PC-9 (cell line): ENCODE measurements at regions of chr7 and their contacts with region 1.

Region 1: GRCh38 chr7:24572997-24573625 is at the start of gene PALS2:
- DNase-seq: peak; percentile 51 to 90
- H3K4me3 ChIP-seq: peak within 1 kb of the TSS; percentile 71
- H3K27ac ChIP-seq: peak within 1 kb of the TSS; percentile 46
- H3K4me1 ChIP-seq: peaks cover 24% of the 10 kb centered on the region
- H3K27me3 ChIP-seq: no peaks in the 10 kb centered on the region
- CTCF ChIP-seq: no peak
- total RNA-seq, gene PALS2: 35.8 and 42.4 TPM in 2 replicates

Region 2: GRCh38 chr7:23679898-23680413 is 893.2 kb before region 1 on chr7 and contains the start of gene FAM221A:
- CTCF ChIA-PET with region 1: interaction called, 3 read pairs
- POLR2A ChIA-PET with region 1: no interaction called
- intact Hi-C with region 1: loop called (anchors 10 kb)
- DNase-seq: peak; percentile 48 to 67
- H3K4me3 ChIP-seq: peak within 1 kb of the TSS; percentile 48
- H3K27ac ChIP-seq: no peak within 1 kb of the TSS
- H3K4me1 ChIP-seq: no peaks in the 10 kb centered on the region
- H3K27me3 ChIP-seq: no peaks in the 10 kb centered on the region
- CTCF ChIP-seq: peak; percentile 49
- total RNA-seq, gene FAM221A: 2.4 and 3.6 TPM in 2 replicates

Region 3: DNA sequence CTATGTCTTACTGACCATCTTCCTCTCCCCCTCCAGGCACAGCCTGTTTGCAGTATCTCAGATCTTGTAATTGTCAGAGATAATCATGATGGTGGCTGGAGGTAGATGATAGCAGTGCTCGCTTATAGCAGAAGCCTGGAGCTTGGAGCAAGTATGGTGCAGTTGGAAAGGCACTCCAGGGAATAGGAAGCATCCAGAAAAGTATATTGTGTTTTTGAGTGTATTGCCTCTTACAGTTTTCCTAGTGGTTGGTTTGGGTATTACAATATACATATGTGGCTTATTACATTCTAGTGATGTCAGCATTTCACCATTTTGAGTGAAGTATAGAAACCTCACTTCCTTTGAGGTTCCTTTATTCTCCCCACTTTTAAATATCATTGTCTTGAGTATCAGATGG is 761.6 kb before region 1 on chr7:
- CTCF ChIA-PET with region 1: no interaction called
- POLR2A ChIA-PET with region 1: no interaction called
- intact Hi-C with region 1: no loop called
- DNase-seq: no peak
- H3K4me3 ChIP-seq: no peak overlapping the region
- H3K27ac ChIP-seq: no peak overlapping the region
- H3K4me1 ChIP-seq: no peaks in the 10 kb centered on the region
- H3K27me3 ChIP-seq: no peaks in the 10 kb centered on the region
- CTCF ChIP-seq: peak; percentile 76

Region 4: GRCh38 chr7:24356718-24357386 is 216.3 kb before region 1 on chr7:
- CTCF ChIA-PET with region 1: no interaction called
- POLR2A ChIA-PET with region 1: no interaction called
- intact Hi-C with region 1: no loop called
- DNase-seq: no peak
- H3K4me3 ChIP-seq: no peak overlapping the region
- H3K27ac ChIP-seq: no peak overlapping the region
- H3K4me1 ChIP-seq: no peaks in the 10 kb centered on the region
- H3K27me3 ChIP-seq: no peaks in the 10 kb centered on the region
- CTCF ChIP-seq: no peak

Region 5: DNA sequence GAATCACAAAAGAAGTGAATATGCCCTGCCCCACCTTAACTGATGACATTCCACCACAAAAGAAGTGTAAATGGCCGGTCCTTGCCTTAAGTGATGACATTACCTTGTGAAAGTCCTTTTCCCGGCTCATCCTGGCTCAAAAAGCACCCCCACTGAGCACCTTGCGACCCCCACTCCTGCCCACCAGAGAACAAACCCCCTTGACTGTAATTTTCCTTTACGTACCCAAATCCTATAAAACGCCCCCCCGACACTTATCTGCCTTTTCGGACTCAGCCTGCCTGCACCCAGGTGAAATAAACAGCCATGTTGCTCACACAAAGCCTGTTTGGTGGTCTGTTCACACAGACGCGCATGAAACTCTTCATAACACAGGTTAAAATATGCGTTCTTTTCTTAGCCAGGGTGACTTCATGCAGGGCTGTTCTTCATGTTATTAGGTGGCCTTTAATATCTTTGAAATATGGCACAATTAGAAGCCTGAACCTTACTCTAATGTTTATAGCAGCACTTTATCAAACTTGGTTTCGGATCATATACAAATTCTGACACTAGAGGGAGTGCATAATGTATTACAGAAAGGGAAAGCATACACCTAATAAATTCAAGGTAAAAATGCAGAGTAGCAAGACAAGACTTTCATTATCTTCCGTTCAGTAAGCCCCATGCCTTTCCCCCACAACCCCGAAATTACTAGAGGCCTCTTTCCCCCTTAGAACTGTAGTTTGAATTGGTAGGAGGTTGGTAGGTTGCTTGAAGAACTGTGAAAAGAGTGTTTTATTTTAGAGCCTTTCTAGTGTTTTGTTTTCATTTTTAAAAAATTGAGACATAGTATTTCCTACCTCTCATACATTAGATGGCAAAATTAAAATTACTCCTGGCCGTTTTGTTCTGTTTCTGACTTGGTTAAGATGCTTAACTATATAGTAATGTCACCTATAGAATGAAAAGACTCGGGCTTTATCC is 171.2 kb before region 1 on chr7:
- CTCF ChIA-PET with region 1: no interaction called
- POLR2A ChIA-PET with region 1: no interaction called
- intact Hi-C with region 1: loop called (anchors 5 kb)
- DNase-seq: peak in 1 of 2 experiments; percentile 60
- H3K4me3 ChIP-seq: peak overlapping the region; percentile 50; the same call in 1 of the 2 replicates
- H3K27ac ChIP-seq: no peak overlapping the region
- H3K4me1 ChIP-seq: 0 out of 2 replicates have a peak, but pooled peaks cover 4% of the 10 kb centered on the region
- H3K27me3 ChIP-seq: no peaks in the 10 kb centered on the region
- CTCF ChIP-seq: peak; percentile 82

Region 6: DNA sequence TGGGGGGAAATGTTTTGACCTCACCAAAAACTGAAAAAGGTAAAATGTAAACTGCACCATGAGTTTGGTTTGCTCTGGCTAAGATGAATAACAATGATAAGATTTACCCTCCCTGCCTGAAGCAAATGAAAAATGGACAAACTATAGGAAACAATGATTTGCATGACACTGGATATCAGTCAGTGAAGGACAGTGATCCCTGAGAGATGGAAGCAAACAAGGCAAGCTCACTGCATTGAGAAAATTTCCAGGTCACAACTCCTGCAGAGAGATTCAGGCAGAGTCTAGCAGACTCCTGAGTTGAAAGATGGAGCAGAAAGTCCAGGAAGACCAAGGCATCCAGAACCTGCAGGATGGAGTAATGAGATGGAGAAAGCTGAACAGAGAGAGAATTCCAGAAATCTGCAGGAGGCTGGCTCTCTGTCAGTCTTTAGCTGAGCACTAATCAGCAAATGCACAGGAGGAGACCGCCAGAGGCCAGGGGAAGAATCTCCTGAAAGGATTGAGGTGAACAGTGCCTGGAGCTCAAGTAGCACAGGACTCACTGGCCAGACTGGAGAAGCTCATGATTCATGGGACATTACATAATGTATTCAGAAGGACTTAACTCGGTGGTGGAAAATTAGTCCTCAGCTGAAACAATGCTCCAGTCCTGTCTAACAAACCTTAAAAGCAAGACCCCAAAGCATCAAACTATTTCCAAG is 51.0 kb before region 1 on chr7:
- CTCF ChIA-PET with region 1: no interaction called
- POLR2A ChIA-PET with region 1: no interaction called
- intact Hi-C with region 1: no loop called
- DNase-seq: no peak
- H3K4me3 ChIP-seq: no peak overlapping the region
- H3K27ac ChIP-seq: no peak overlapping the region
- H3K4me1 ChIP-seq: no peaks in the 10 kb centered on the region
- H3K27me3 ChIP-seq: no peaks in the 10 kb centered on the region
- CTCF ChIP-seq: no peak

Region 7: DNA sequence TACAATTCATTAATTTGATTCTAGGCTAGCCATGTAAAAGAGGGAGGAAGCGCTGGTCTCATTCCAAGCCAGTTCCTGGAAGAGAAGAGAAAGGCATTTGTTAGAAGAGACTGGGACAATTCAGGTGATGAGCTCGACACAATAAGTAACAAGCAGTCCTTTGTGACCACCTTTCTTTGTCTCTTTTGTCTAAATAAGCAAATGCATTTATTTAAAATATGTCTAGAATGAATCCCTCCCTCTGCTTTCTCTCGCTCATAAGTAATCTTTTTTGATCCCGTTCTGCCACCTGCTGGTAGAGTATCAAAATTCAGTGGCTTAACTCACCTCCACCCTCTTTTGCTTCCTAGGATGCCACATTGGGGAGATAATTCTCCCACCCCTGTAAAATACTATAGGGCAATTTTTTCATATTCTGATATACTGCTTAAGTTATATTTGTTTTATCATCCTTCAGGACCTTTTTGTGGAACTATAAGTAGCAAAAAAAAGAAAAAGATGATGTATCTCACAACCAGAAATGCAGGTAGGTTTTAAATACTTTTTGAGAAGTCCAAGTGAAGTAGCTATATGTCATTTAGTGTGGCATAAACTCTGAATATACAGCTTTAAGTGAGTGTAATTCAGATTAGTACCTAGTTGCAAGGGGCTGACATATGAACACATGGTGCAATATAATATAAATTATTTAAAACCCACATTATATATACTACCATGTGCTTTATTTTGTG is 92.6 kb after region 1 on chr7:
- CTCF ChIA-PET with region 1: no interaction called
- POLR2A ChIA-PET with region 1: no interaction called
- intact Hi-C with region 1: loop called (anchors 2 kb)
- DNase-seq: peak; percentile 39 to 48
- H3K4me3 ChIP-seq: no peak overlapping the region
- H3K27ac ChIP-seq: no peak overlapping the region
- H3K4me1 ChIP-seq: peaks cover 21% of the 10 kb centered on the region
- H3K27me3 ChIP-seq: no peaks in the 10 kb centered on the region
- CTCF ChIP-seq: peak; percentile 97

Region 8: DNA sequence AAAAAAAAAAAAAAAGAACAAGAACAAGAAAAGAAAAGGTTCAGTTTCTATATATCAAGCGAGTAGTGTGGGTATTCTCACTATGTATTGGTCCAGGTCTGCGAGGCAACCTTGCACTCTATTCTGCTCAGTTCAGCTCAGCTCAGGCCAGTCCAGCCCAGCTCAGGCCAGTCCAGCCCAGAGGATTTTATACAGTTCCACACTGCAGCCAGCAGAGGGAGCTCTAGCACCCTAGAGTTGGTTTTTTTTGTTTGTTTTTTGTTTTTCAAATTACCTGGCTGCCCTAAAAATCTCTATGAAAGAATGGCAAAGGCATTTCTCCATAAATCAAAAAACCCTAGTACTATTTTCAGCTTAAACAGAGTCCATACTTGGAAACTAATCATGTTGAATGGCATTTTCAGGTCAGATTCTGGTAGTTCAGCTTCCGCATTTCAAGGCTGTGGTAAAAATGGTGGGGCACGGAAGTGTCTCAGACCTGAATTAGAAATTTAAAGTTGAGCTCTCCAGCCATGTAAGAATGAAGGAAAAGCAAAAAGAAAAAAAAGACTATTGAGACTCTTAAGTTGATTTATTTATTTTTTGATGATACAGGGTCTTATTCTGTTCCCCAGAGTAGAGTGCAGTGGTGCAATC is 239.3 kb after region 1 on chr7:
- CTCF ChIA-PET with region 1: interaction called, 8 read pairs
- POLR2A ChIA-PET with region 1: no interaction called
- intact Hi-C with region 1: loop called (anchors 5 kb)
- DNase-seq: peak in 1 of 2 experiments; percentile 61
- H3K4me3 ChIP-seq: no peak overlapping the region
- H3K27ac ChIP-seq: no peak overlapping the region
- H3K4me1 ChIP-seq: no peaks in the 10 kb centered on the region
- H3K27me3 ChIP-seq: no peaks in the 10 kb centered on the region
- CTCF ChIP-seq: peak; percentile 99

Region 9: GRCh38 chr7:25125137-25125946 is 552.2 kb after region 1 on chr7 and contains the start of gene CYCS:
- CTCF ChIA-PET with region 1: no interaction called
- POLR2A ChIA-PET with region 1: interaction called, 9 read pairs
- intact Hi-C with region 1: loop called (anchors 10 kb)
- DNase-seq: peak; percentile 100
- H3K4me3 ChIP-seq: peak within 1 kb of the TSS; percentile 66
- H3K27ac ChIP-seq: peak within 1 kb of the TSS; percentile 66
- H3K4me1 ChIP-seq: peaks cover 21% of the 10 kb centered on the region; the same call in 1 of the 2 replicates
- H3K27me3 ChIP-seq: peaks cover 21% of the 10 kb centered on the region
- CTCF ChIP-seq: no peak
- total RNA-seq, gene CYCS: 101 and 120 TPM in 2 replicates